GM10248 (cell line): ENCODE measurements at regions of chr6 and their contacts with region 1.

Region 1: DNA sequence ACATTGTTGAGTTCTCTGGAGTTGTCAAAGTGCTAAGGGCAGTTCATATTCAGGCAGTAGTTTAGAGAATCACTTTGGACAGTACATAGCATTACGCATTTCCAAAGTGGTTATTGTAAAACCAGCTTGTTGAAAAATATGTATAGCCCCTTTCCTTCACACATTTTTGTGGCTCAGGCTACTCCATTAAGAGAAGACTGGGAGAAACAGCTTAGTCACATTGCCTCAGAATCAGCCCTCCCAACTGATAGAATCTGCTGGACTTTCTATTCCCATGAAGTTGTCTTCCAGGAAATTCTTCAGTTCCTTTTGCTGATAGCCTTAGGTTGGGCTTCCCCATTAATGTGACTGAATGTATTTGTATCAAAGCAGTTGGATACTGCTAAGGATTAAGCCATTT is 39.5 kb upstream of the HDGFL1 start:
- DNase-seq: no peak
- CTCF ChIP-seq: no peak

Region 2: DNA sequence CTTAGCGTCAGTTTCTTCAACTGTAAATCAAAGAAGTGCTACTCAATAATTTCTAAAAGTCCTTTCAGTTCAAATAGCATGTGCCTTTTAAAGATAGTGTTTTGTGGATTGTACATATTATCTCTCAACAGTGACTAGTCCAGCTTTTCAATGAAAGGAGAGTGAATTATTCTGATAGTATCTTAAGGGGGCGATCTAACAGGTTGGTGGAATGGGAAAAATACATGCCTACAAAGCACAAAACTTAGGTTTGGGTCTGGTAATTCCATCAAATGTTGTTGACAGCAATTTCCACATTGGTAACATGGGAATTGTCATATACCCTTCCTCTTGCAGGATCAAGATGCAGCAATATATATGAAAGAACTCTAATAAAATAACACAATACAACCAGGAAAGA is 10.6 kb before region 1 on chr6:
- CTCF ChIA-PET with region 1: interaction called, 19 read pairs
- POLR2A ChIA-PET with region 1: no interaction called
- DNase-seq: no peak
- CTCF ChIP-seq: no peak